AG04449 (cell line): ENCODE measurements at regions of chr18 and their contacts with region 1.

Region 1: DNA sequence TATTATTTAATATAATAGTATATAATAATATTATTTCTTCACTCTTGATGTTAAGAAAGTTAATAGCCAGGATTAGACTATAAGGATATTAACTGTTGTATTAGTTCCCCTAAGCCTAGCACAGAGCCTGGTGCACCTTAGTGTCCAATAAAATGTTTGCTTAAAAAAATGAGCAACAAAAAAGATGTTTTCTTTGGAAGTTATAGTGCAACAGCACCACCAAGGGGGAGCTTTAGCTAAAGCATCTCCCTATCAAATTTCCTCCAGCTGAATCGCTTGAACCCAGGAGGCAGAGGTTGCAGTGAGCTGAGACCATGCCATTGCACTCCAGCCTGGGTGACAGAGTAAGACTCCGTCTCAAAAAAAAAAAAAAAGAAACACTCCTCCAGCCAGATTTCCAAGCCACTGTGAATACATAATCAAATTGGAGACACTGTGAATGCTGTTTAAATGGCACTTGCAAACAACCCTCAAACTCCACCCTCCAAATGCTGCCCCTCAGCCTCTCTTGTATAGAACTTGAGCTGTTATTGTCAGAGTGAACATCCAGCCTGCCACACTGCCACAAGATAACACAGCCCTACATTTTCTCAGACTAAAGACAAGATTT is 221.9 kb downstream of the DYM start:
- DNase-seq: no peak
- H3K4me3 ChIP-seq: no peak overlapping the region
- CTCF ChIP-seq: peak; percentile 38

Region 2: DNA sequence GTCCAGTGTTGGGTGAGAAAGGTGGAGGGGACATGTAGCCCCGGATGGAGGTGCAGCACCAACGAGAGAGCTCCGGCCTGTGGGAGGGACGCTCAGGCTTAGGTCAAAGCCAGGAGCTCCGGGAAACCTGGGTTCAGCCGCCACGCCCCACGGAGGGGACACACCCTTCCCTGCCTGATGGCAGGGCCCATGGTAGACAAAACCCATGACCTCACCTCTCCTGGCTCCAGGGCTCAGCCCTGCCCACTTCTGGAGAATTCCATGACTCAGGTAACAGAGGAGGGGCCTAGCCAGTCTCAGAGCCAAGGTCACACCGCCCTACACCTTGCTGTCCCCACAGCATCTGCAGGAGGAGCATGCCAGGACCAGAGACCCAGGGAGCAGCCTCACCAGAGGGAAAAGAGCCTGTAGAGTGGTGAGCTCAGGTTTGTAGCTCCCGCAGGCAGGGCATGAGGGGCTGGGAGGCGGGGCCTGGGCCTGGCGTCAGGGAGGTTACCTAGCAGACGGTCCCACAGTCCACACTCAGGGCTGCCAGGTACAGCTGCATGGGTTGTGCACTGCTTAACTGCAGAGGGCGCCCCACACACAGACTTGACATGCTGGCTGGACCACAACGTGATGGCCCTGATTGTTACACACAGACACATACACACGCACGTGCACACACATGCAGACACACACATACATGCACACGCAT is 217.0 kb before region 1 on chr18:
- CTCF ChIA-PET with region 1: interaction called, 12 read pairs
- POLR2A ChIA-PET with region 1: no interaction called
- DNase-seq: no peak
- H3K4me3 ChIP-seq: no peak overlapping the region
- CTCF ChIP-seq: peak; percentile 50

Region 3: GRCh38 chr18:49227441-49228165 is 10.9 kb before region 1 on chr18:
- CTCF ChIA-PET with region 1: interaction called, 15 read pairs
- POLR2A ChIA-PET with region 1: no interaction called
- DNase-seq: no peak
- H3K4me3 ChIP-seq: no peak overlapping the region
- CTCF ChIP-seq: no peak

Region 4: DNA sequence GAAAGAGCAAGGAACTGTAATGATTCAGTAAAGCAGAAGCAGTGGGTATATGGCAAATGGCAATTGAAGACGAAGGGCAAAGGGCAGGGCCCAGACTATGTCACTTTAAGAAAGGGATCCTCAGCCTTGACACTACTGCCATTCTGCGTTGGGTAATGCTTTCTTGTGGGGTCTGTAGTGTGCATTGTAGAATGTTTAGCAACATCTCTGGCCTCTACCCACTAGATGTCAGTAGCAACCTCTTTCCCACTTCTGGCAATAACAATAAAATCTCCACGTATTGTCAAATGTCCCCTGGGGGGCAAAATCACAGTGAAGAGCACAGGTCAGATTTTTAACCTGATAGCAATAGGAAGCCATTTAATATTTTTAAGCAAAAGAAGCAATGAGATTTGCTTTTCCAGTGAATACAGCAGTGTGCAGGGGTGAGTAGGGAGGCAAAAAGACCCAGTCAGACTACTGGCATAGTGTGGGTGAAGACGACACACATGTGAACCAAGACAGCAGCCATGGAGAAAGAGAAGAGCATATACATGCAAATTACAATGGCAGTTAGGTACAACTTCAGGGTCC is 12.4 kb after region 1 on chr18:
- CTCF ChIA-PET with region 1: interaction called, 11 read pairs
- POLR2A ChIA-PET with region 1: no interaction called
- DNase-seq: no peak
- H3K4me3 ChIP-seq: no peak overlapping the region
- CTCF ChIP-seq: peak; percentile 41

Region 5: DNA sequence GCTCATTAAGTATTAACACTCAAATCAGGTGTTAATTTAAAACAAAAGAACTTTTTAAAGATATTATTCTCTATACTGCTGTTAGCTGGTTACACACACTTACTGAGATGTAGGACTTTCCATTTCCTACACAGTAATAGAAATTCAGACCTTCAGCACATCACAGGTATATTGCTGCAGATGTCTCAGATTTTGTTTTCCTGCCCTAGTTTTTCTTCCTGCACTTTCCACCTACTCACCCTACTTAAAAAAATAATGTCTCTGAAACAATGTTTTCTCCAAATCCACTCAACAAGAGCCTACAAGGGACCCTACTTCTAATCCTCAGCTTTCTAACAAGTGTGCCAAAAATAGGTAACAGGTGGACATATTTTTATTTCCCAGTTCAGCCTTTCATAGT is 178.0 kb after region 1 on chr18:
- CTCF ChIA-PET with region 1: interaction called, 16 read pairs
- POLR2A ChIA-PET with region 1: no interaction called
- DNase-seq: no peak
- H3K4me3 ChIP-seq: no peak overlapping the region
- CTCF ChIP-seq: no peak